BJ (cell line): ENCODE measurements at regions of chr7 and their contacts with region 1.

Region 1: DNA sequence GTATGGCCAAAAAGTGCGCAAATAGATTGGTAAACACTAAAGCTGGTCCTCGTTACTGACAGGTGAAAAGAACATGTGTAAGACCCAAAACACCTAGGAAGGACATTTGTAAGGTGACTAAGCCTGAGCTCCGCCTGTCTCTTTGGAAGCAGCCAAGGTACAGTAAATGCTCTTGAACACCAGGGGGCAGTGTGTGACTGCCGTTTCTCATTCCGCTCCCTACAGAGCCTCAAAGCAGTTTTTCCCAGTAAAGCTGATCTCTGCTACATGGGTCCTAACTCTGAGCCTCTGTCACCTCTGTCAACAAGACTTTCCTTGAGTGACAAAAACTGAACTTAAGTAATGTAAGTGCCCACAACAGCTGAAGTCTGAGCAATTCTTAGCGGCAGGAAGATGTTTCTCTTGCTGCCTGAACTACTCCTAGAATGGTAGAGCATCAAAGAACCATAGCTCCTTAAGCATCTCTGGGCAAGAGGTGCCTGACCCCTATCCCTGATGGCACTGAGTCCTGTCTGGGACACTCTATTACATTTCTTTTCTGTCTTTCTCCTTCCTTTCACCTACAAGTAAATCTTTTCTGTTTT is 238.0 kb upstream of the INHBA start:
- DNase-seq: no peak
- H3K4me3 ChIP-seq: no peak overlapping the region
- H3K27me3 ChIP-seq: no peaks in the 10 kb centered on the region
- CTCF ChIP-seq: peak; percentile 88

Region 2: GRCh38 chr7:41837916-41838315 is 102.9 kb before region 1 on chr7:
- CTCF ChIA-PET with region 1: no interaction called
- POLR2A ChIA-PET with region 1: no interaction called
- DNase-seq: no peak
- H3K4me3 ChIP-seq: no peak overlapping the region
- H3K27me3 ChIP-seq: no peaks in the 10 kb centered on the region
- CTCF ChIP-seq: no peak

Region 3: DNA sequence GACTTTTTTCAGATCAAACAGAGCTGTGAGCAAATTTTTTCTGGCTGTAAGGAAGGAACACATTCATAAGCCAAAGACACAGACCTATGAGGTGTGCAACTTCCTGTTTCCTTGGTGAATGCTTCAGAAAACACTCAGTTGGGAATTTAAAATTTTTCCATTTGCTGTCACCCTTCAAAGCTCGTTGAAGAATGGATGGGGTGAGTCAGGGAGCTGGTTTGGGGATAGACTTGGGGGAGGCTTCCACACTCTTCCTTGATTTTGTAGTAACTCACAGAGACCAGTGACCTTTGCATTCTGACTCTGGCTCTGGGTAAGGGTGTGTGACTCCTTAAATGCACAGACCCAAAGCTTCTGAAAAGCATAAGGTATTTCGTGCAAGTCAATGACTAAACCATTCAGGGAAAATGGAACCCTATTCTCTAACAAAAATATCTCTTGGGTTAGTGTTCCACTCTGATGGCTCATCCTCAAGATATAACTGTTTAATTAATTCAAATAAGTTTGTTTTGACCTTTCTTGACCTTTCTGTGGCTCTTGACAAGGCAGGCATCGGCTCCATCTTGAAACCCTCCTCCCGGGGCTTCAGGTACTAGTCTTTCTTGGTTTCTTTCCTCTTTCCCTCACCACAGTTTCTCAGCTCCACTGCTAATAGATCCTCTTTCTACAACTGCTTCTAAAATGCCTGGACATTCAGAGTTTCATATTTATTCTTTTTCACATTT is 10.2 kb before region 1 on chr7:
- CTCF ChIA-PET with region 1: interaction called, 25 read pairs
- POLR2A ChIA-PET with region 1: no interaction called
- DNase-seq: no peak
- H3K4me3 ChIP-seq: no peak overlapping the region
- H3K27me3 ChIP-seq: no peaks in the 10 kb centered on the region
- CTCF ChIP-seq: no peak

Region 4: DNA sequence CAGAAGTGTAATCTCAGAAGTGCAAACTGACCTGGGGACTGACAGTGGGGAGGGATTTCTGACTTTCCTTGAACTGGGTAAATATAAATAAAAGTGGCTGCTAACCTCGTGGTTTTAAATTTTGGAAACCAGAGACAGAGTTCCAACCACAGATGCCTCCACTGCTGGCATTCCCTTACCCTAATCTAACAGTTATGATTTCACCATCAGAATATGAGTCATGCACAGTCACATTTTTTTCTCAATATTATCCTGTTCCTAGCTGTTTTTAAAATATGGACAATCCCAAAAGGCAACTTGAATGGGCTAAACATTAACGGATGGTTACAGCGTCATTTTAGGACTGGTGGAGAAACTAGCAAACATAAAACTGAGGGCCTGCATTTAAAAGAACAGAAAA is 26.3 kb after region 1 on chr7:
- CTCF ChIA-PET with region 1: interaction called, 14 read pairs
- POLR2A ChIA-PET with region 1: no interaction called
- DNase-seq: no peak
- H3K4me3 ChIP-seq: no peak overlapping the region
- H3K27me3 ChIP-seq: no peaks in the 10 kb centered on the region
- CTCF ChIP-seq: no peak

Region 5: GRCh38 chr7:42574685-42575084 is 633.8 kb after region 1 on chr7:
- CTCF ChIA-PET with region 1: interaction called, 15 read pairs
- POLR2A ChIA-PET with region 1: no interaction called
- DNase-seq: no peak
- H3K4me3 ChIP-seq: no peak overlapping the region
- H3K27me3 ChIP-seq: peaks cover 5% of the 10 kb centered on the region
- CTCF ChIP-seq: no peak

Region 6: GRCh38 chr7:42831718-42832431 is 891.0 kb after region 1 on chr7:
- CTCF ChIA-PET with region 1: interaction called, 79 read pairs
- POLR2A ChIA-PET with region 1: no interaction called
- DNase-seq: no peak
- H3K4me3 ChIP-seq: no peak overlapping the region
- H3K27me3 ChIP-seq: peaks cover 2% of the 10 kb centered on the region
- CTCF ChIP-seq: peak; percentile 76

Region 7: DNA sequence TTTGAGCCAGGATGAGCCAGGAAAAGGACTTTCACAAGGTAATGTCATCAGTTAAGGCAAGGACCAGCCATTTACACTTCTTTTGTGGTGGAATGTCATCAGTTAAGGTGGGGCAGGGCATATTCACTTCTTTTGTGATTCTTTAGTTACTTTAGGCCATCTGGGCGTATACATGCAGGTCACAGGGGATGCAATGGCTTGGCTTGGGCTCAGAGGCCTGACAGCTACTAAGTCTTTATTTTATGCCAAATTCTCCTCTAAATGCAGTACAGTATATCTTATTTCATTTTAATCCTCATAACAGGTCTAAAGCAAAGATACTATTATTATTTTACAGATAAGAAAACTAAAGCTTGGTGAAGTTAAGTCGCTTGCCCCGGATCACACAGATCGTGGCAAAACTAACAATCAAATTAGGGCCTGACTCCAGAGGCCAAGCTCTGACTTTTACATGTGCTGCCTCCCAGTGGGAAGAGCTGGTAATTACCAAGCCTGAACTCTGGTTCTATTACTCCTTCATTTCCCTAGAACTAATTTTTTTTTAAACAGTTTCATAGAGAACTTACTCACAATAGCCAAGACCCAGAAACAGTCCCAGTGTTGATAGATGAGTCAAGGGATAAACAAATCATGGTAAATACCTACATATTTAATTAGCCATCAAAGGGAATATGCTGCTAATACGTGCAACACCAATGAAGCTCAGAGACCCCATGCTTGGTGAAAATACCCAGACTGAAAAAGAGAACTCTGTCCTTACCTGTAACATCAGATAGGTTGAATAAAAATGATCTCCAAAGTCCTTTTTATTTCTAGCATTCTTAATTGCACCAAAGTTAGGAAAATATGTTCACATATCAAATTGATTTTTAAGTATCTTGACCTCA is 935.6 kb after region 1 on chr7:
- CTCF ChIA-PET with region 1: interaction called, 93 read pairs
- POLR2A ChIA-PET with region 1: no interaction called
- DNase-seq: no peak
- H3K4me3 ChIP-seq: no peak overlapping the region
- H3K27me3 ChIP-seq: no peaks in the 10 kb centered on the region
- CTCF ChIP-seq: peak; percentile 82